Endothelial cell of umbilical vein (primary cell): ENCODE measurements at regions of chr12 and their contacts with region 1.

Region 1: GRCh38 chr12:95574799-95575452 is 23.6 kb upstream of the USP44 start:
- DNase-seq: peak; percentile 65
- H3K4me3 ChIP-seq: no peak overlapping the region
- H3K27ac ChIP-seq: no peak overlapping the region
- H3K4me1 ChIP-seq: no peaks in the 10 kb centered on the region
- H3K27me3 ChIP-seq: peaks cover 2 to 4% of the 10 kb centered on the region in 2 experiments
- CTCF ChIP-seq: peak; percentile 55 to 58
- POLR2A ChIP-seq: no peak

Region 2: GRCh38 chr12:95538656-95539055 is 36.3 kb before region 1 on chr12:
- CTCF ChIA-PET with region 1: interaction called, 29 read pairs
- POLR2A ChIA-PET with region 1: no interaction called
- dilution Hi-C with region 1: no loop called
- intact Hi-C with region 1: no loop called
- DNase-seq: no peak
- H3K4me3 ChIP-seq: no peak overlapping the region
- H3K27ac ChIP-seq: no peak overlapping the region
- H3K4me1 ChIP-seq: no peaks in the 10 kb centered on the region
- H3K27me3 ChIP-seq: no peaks in the 10 kb centered on the region
- CTCF ChIP-seq: no peak
- POLR2A ChIP-seq: no peak

Region 3: GRCh38 chr12:95548056-95548538 is 26.8 kb before region 1 on chr12:
- CTCF ChIA-PET with region 1: interaction called, 20 read pairs
- POLR2A ChIA-PET with region 1: no interaction called
- dilution Hi-C with region 1: no loop called
- intact Hi-C with region 1: no loop called
- DNase-seq: peak; percentile 32
- H3K4me3 ChIP-seq: peak overlapping the region; percentile 48 to 69 (median 58)
- H3K27ac ChIP-seq: no peak overlapping the region
- H3K4me1 ChIP-seq: peaks cover 19% of the 10 kb centered on the region
- H3K27me3 ChIP-seq: peaks cover 8 to 14% of the 10 kb centered on the region in 2 experiments
- CTCF ChIP-seq: no peak
- POLR2A ChIP-seq: no peak

Region 4: GRCh38 chr12:95553197-95553943 is 21.6 kb before region 1 on chr12:
- CTCF ChIA-PET with region 1: interaction called, 20 read pairs
- POLR2A ChIA-PET with region 1: no interaction called
- dilution Hi-C with region 1: no loop called
- intact Hi-C with region 1: no loop called
- DNase-seq: no peak
- H3K4me3 ChIP-seq: no peak overlapping the region
- H3K27ac ChIP-seq: no peak overlapping the region
- H3K4me1 ChIP-seq: peaks cover 5% of the 10 kb centered on the region
- H3K27me3 ChIP-seq: peaks cover 7 to 9% of the 10 kb centered on the region in 2 experiments
- CTCF ChIP-seq: no peak
- POLR2A ChIP-seq: no peak

Region 5: GRCh38 chr12:95593266-95593871 is 18.4 kb after region 1 on chr12:
- CTCF ChIA-PET with region 1: interaction called, 10 read pairs
- POLR2A ChIA-PET with region 1: no interaction called
- dilution Hi-C with region 1: no loop called
- intact Hi-C with region 1: no loop called
- DNase-seq: no peak
- H3K4me3 ChIP-seq: no peak overlapping the region
- H3K27ac ChIP-seq: no peak overlapping the region
- H3K4me1 ChIP-seq: no peaks in the 10 kb centered on the region
- H3K27me3 ChIP-seq: no peaks in the 10 kb centered on the region
- CTCF ChIP-seq: no peak
- POLR2A ChIP-seq: no peak

Region 6: GRCh38 chr12:95805864-95806671 is 231.1 kb after region 1 on chr12:
- CTCF ChIA-PET with region 1: interaction called, 14 read pairs
- POLR2A ChIA-PET with region 1: interaction called, 3 read pairs
- dilution Hi-C with region 1: no loop called
- intact Hi-C with region 1: no loop called
- DNase-seq: peak; percentile 85
- H3K4me3 ChIP-seq: no peak overlapping the region
- H3K27ac ChIP-seq: peak overlapping the region; percentile 74
- H3K4me1 ChIP-seq: peaks cover 40% of the 10 kb centered on the region
- H3K27me3 ChIP-seq: no peaks in the 10 kb centered on the region
- CTCF ChIP-seq: no peak
- POLR2A ChIP-seq: no peak